Uterus (tissue), 4 donors: ENCODE measurements at regions of chr1 and their contacts with region 1.

Region 1: GRCh38 chr1:201511941-201512539 is 5.1 kb upstream of the CSRP1 start:
- DNase-seq: peak; percentile 69
- H3K4me3 ChIP-seq: no peak overlapping the region
- H3K27ac ChIP-seq: peak overlapping the region; percentile 97 to 99
- H3K4me1 ChIP-seq: peaks cover 4 to 12% of the 10 kb centered on the region in 2 donors
- H3K27me3 ChIP-seq: no peaks in the 10 kb centered on the region
- CTCF ChIP-seq: peak in 1 of 4 experiments; percentile 15
- POLR2A ChIP-seq: no peak

Region 2: GRCh38 chr1:201019321-201019977 is 492.6 kb before region 1 on chr1:
- intact Hi-C with region 1: no loop called
- DNase-seq: no peak
- H3K4me3 ChIP-seq: no peak overlapping the region
- H3K27ac ChIP-seq: no peak overlapping the region
- H3K4me1 ChIP-seq: peaks cover 0 to 15% of the 10 kb centered on the region in 2 donors
- H3K27me3 ChIP-seq: no peaks in the 10 kb centered on the region
- CTCF ChIP-seq: no peak
- POLR2A ChIP-seq: no peak

Region 3: GRCh38 chr1:201447911-201448871 is 63.8 kb before region 1 on chr1:
- intact Hi-C with region 1: loop called (anchors 5 kb)
- DNase-seq: peak; percentile 81 to 85
- H3K4me3 ChIP-seq: no peak overlapping the region
- H3K27ac ChIP-seq: peak overlapping the region; percentile 23 to 24
- H3K4me1 ChIP-seq: peaks cover 3 to 10% of the 10 kb centered on the region in 2 donors
- H3K27me3 ChIP-seq: no peaks in the 10 kb centered on the region
- CTCF ChIP-seq: peak; percentile 86 to 93 (median 89)
- POLR2A ChIP-seq: no peak

Region 4: DNA sequence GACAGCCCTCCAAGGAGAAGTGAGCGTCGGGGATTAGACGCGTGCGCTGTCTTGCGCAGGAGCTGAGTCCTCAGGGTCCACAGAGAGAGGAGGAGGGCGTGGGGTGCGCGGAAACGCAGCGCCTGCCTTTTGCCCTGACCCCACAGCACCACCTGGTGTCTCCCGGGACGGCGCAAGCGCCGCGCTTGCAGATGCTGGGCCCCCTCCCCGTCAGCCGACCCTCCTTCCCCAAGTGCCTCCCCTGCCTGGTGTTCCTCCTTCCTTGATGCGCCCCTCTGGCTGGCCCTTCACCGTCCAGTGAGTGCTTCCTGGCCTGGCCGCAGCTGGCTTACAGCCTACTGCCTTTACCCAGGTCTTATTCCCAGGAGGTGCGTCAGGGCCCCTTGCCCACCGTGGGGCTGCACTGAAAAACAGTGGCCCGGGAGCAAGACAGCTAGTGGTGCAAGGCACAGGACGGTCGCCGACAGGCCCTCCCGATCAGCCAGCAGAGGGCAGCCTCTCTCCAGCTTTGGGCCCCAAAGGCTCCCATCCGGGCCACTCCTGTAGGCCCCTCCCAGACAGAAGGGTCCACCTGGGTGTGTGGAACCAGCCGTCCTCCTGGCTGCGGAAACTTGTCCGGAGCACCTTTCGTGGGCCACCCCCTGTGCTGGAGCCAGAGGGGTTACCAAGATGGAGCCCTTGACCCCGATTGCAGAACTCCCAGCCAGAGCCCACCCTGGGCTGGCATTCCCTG is 30.1 kb before region 1 on chr1:
- intact Hi-C with region 1: loop called (anchors 2 kb)
- DNase-seq: peak; percentile 91 to 93
- H3K4me3 ChIP-seq: peak overlapping the region; percentile 4 to 18
- H3K27ac ChIP-seq: peak overlapping the region; percentile 71 to 97
- H3K4me1 ChIP-seq: peaks cover 6 to 15% of the 10 kb centered on the region in 2 donors
- H3K27me3 ChIP-seq: no peaks in the 10 kb centered on the region
- CTCF ChIP-seq: peak; percentile 90 to 98 (median 98)
- POLR2A ChIP-seq: peak in 1 of 2 donors; percentile 25